Esophagus squamous epithelium (tissue), 5 donors: ENCODE measurements at regions of chr6 and their contacts with region 1.

Region 1: GRCh38 chr6:136582711-136583471 is 32.7 kb upstream of the MAP7 start:
- DNase-seq: no peak
- H3K4me3 ChIP-seq: no peak overlapping the region
- H3K27ac ChIP-seq: peak overlapping the region; percentile 50 to 81 (median 62)
- H3K4me1 ChIP-seq: peaks cover 0 to 27% (median 3%) of the 10 kb centered on the region in 3 donors
- H3K27me3 ChIP-seq: no peaks in the 10 kb centered on the region
- CTCF ChIP-seq: peak; percentile 45 to 79 (median 58)
- POLR2A ChIP-seq: no peak

Region 2: DNA sequence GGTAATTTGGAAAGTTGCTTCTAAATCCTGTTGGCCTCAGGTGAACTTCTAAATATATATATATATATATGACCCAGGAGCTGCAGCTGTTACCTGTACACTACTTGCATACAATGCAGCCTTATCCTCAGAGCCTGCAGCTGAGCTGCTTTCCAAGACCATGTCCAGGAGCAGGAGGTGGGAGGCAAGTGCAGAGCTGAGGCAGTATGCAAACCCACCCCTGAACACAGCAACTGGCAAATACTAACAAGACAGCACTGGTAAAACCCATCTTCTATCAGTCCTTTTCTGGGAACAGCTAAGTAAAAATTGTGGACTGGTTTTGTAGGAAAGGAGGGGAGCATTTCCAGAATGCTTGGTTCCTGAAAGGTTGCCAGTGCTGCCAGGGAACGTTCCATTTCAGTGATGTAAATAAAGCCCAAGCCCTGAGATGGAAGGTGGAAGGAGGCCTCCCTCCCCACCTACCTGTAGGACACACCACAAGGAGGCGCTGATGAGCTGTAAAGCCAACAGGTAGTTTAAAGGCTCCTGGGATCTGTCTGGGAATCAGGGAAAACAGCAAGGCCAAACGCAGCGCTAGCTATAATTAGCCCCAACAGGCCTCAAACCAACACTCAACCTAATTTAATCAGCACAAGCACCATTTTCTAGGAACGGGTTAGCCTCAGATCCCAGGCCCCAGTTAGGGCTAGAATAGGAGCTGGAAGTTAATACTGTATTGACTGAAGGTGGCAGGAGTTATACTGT is 61.1 kb after region 1 on chr6:
- intact Hi-C with region 1: loop called (anchors 10 kb)
- DNase-seq: peak; percentile 3
- H3K4me3 ChIP-seq: no peak overlapping the region
- H3K27ac ChIP-seq: peak overlapping the region in 3 of 4 donors; percentile 53 to 69 (median 57)
- H3K4me1 ChIP-seq: peaks cover 4 to 40% (median 22%) of the 10 kb centered on the region in 3 donors
- H3K27me3 ChIP-seq: no peaks in the 10 kb centered on the region
- CTCF ChIP-seq: peak; percentile 73 to 97 (median 94)
- POLR2A ChIP-seq: no peak

Region 3: DNA sequence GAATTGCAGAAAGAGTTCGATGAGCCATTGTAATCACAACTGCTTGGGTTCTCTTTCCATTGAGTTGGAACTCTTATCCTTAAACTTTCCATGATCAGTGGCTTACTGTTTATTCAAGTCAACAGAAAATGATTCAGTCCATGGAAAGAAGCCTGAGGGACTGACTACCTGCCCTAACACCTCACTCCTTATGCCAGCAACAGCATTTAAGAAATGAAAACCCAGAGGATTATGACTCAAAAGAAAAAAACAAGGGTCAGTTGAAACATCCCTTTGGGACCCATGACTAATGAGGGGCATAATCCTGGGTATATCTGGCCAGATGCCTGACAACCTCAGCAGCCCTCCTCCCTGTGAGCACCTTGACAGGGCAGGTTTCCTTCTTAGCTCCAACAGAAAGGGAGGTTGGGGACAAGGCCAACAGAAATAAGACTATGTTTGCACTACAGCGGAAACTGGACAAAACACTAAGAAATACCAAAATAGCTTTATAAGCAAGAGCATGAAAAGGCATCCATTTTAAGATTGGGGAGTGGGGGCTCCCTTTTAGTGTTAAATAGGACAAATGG is 102.7 kb after region 1 on chr6:
- intact Hi-C with region 1: no loop called
- DNase-seq: no peak
- H3K4me3 ChIP-seq: no peak overlapping the region
- H3K27ac ChIP-seq: peak overlapping the region in 3 of 4 donors; percentile 26 to 36 (median 30)
- H3K4me1 ChIP-seq: peaks cover 3 to 47% (median 16%) of the 10 kb centered on the region in 3 donors
- H3K27me3 ChIP-seq: no peaks in the 10 kb centered on the region
- CTCF ChIP-seq: no peak
- POLR2A ChIP-seq: no peak

Region 4: GRCh38 chr6:136696238-136696637 is 113.3 kb after region 1 on chr6:
- intact Hi-C with region 1: no loop called
- DNase-seq: no peak
- H3K4me3 ChIP-seq: no peak overlapping the region
- H3K27ac ChIP-seq: peak overlapping the region; percentile 18 to 72 (median 56)
- H3K4me1 ChIP-seq: peaks cover 8 to 74% (median 13%) of the 10 kb centered on the region in 3 donors
- H3K27me3 ChIP-seq: no peaks in the 10 kb centered on the region
- CTCF ChIP-seq: no peak
- POLR2A ChIP-seq: no peak

Region 5: GRCh38 chr6:136782021-136782770 is 199.3 kb after region 1 on chr6:
- intact Hi-C with region 1: no loop called
- DNase-seq: no peak
- H3K4me3 ChIP-seq: no peak overlapping the region
- H3K27ac ChIP-seq: peak overlapping the region in 3 of 4 donors; percentile 64 to 79 (median 77)
- H3K4me1 ChIP-seq: peaks cover 32 to 78% (median 50%) of the 10 kb centered on the region in 3 donors
- H3K27me3 ChIP-seq: no peaks in the 10 kb centered on the region
- CTCF ChIP-seq: no peak
- POLR2A ChIP-seq: no peak

Region 6: DNA sequence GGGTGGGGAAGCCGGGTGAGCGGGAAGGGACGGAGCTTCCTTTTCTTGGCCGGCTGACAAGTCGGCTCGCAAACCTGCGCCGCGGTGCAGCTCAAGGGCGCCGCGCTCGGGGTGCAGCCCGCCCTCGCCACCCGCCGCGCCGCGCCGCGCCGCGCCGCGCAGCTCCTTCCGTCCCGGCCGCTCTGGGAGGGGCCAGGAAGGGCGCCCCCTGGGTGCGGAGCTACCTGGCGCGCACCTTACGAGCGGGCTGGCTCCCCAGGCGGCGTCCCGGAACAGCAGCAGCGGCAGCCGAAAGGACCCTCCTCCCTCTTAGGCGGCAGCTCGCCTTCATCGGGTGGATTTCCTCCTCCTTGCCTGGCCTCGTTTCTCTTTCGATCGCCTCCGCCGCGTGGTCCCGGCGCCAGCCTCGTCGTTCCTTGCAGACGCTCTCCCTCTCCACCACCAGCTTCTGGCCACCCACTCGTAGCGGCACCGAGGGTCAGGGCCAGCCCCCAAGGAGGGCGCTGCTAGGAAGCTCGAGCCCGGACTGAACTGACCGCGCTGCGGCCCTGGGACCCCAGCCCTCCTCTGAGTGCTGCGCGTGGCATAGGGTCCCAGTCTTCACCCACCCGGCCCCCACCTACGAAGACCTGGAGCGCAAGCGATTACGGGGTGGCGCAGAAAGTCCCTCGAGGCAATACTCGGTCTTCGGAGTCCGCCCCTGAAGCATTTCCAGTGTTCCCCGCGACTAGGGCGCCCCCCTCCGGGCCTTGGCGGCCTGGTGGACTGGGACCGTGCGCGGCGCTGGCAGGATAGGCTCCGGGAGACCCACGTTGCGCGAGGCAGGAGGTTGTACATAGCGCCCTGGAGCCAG is 209.7 kb after region 1 on chr6 and contains the start of gene MAP3K5:
- intact Hi-C with region 1: loop called (anchors 10 kb)
- DNase-seq: peak; percentile 72
- H3K4me3 ChIP-seq: peak within 1 kb of the TSS; percentile 90 to 97 (median 96)
- H3K27ac ChIP-seq: peak within 1 kb of the TSS; percentile 92 to 96 (median 94)
- H3K4me1 ChIP-seq: peaks cover 7 to 47% (median 18%) of the 10 kb centered on the region in 3 donors
- H3K27me3 ChIP-seq: no peaks in the 10 kb centered on the region
- CTCF ChIP-seq: peak; percentile 75 to 95 (median 88)
- POLR2A ChIP-seq: peak in 3 of 4 donors; percentile 17 to 64 (median 46)
- total RNA-seq, gene MAP3K5: 9.2 to 22.9 (median 20.9) TPM